CD8-positive, alpha-beta T cell (primary cell): ENCODE measurements at regions of chr2 and their contacts with region 1.

Region 1: DNA sequence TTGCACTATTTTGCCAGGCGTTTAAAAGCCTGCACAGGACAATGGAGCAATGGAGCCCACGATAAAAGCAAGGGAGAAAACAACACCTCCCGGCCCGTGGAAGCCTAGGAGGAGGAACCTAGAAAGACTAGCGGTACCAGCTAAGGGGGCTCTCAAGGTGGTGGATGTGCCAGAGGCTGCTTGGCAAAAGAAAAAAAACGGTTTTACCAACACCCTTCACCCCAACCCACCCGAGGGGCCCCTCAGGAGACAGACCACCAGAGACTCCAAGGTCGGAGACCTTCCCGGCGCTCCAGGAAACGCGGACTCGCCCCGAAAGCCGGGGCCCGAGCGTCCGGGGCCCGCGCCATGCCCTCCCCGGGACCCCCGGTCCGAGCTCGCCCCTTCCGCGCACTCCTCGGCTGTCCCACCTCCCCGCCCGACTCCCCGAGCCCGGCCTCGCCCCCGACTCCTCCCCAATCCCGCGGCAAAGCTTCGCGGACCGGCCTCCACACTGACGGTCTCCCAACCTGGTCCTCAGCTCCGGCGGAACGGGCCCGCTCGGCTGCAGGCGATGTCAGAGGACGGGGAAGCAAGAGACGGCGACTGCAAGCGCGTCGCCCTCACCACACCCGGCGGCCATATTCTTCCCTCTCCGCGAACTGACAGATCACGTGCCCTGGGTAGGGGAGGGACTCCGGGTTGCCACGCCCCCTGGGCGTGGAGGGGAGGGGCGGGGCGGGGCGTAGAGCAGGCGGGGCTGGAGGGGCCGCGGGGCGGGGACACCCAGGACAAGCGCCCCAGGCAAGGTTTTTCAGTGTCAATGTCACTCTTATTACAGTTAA is at the start of gene KIDINS220:
- DNase-seq: peak; percentile 74 to 92 (median 85)
- ATAC-seq: peak; percentile 96
- H3K4me3 ChIP-seq: peak within 1 kb of the TSS; percentile 76 to 96
- H3K4me3 Mint-ChIP-seq: peak within 1 kb of the TSS; percentile 100
- H3K27ac ChIP-seq: peak within 1 kb of the TSS; percentile 62 to 81
- H3K27ac Mint-ChIP-seq: peak within 1 kb of the TSS; percentile 99
- H3K4me1 ChIP-seq: peaks cover 49% of the 10 kb centered on the region
- H3K4me1 Mint-ChIP-seq: peaks cover 55% of the 10 kb centered on the region
- H3K27me3 ChIP-seq: peaks cover 0 to 2% of the 10 kb centered on the region in 2 experiments
- H3K27me3 Mint-ChIP-seq: no peaks in the 10 kb centered on the region
- CTCF ChIP-seq: no peak
- total RNA-seq, gene KIDINS220: 26.2 to 28.8 TPM

Region 2: DNA sequence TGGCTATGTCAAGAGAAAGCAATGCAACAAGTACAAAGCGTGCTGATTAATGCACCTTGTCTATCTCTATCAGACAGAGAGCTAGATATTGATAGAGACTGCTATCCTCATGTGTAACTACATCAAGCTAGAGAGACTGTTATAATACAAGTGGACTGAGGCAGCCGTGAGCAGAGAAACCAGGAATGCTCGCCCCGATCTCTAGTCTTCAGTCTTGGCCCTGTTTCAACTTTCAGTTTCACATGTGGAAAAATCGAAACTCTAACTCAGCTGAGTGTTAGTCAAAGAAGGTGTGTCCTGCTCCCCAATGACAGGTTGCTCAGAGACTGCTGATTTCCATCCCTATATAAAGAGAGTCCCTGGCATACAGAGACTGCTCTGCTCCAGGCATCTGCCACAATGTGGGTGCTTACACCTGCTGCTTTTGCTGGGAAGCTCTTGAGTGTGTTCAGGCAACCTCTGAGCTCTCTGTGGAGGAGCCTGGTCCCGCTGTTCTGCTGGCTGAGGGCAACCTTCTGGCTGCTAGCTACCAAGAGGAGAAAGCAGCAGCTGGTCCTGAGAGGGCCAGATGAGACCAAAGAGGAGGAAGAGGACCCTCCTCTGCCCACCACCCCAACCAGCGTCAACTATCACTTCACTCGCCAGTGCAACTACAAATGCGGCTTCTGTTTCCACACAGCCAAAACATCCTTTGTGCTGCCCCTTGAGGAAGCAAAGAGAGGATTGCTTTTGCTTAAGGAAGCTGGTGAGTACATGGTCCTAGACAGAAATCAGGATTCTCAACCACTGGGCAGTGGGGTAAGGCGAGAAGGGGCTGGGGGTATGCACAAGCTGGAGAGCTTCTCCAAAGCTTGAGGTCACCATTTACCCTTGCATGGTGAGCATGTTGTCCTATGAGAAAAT is 1959.5 kb before region 1 on chr2 and contains the start of gene RSAD2:
- CTCF ChIA-PET with region 1: no interaction called
- POLR2A ChIA-PET with region 1: no interaction called
- intact Hi-C with region 1: loop called in 1 of 2 experiments (anchors 10 kb)
- DNase-seq: peak in 7 of 9 experiments; percentile 16 to 81 (median 47)
- ATAC-seq: peak; percentile 84
- H3K4me3 ChIP-seq: peak within 1 kb of the TSS; percentile 56 to 63
- H3K4me3 Mint-ChIP-seq: peak within 1 kb of the TSS; percentile 88
- H3K27ac ChIP-seq: peak within 1 kb of the TSS; percentile 34 to 47
- H3K27ac Mint-ChIP-seq: peak within 1 kb of the TSS; percentile 87
- H3K4me1 ChIP-seq: peaks cover 59% of the 10 kb centered on the region
- H3K4me1 Mint-ChIP-seq: peaks cover 66% of the 10 kb centered on the region
- H3K27me3 ChIP-seq: no peaks in the 10 kb centered on the region
- H3K27me3 Mint-ChIP-seq: no peaks in the 10 kb centered on the region
- CTCF ChIP-seq: no peak
- total RNA-seq, gene RSAD2: 1.8 to 2.1 TPM

Region 3: DNA sequence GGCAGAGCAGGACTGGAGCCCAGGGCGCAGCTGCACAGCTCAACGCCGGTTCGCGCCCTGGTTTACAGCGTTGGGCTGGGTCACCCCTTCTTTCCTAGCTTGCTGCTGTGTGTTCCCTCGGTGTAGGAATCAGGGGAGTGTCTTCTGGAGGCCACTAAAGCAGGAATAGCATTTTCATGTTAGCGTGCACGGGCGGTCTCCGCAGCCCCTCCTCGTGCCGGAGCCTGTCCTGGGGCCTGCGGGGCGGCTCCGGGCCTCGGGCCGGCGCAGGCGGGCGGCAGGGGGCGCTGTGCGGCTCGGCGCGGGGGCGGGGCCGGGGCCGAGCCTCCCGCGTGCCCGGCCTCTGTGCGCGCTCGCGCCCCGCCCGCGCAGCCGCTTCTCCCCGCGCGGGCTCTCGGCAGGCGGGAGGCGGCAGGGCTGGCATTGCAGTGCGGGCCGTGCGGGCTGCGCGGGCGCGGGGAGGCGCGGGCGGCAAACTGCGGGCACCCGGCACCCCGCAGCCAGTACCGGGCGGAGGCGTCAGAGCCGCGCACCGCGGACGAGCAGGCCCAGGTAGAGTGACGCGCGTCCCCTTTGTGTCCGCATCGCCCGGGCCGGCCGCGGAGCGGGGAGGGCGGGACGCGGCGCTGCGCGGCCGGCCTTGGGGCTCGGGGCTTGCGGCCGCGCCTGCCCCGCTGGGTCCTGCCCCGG is 1920.0 kb before region 1 on chr2 and contains the start of gene RNF144A:
- CTCF ChIA-PET with region 1: no interaction called
- POLR2A ChIA-PET with region 1: no interaction called
- intact Hi-C with region 1: loop called in 1 of 2 experiments (anchors 10 kb)
- DNase-seq: peak; percentile 52 to 89 (median 74)
- ATAC-seq: peak; percentile 77
- H3K4me3 ChIP-seq: peak within 1 kb of the TSS; percentile 57 to 65
- H3K4me3 Mint-ChIP-seq: peak within 1 kb of the TSS; percentile 80
- H3K27ac ChIP-seq: peak within 1 kb of the TSS in 1 of 2 experiments; percentile 28
- H3K27ac Mint-ChIP-seq: no peak within 1 kb of the TSS
- H3K4me1 ChIP-seq: peaks cover 79% of the 10 kb centered on the region
- H3K4me1 Mint-ChIP-seq: peaks cover 75% of the 10 kb centered on the region
- H3K27me3 ChIP-seq: no peaks in the 10 kb centered on the region
- H3K27me3 Mint-ChIP-seq: no peaks in the 10 kb centered on the region
- CTCF ChIP-seq: peak; percentile 63
- total RNA-seq, gene RNF144A: 25.8 to 28.8 TPM

Region 4: DNA sequence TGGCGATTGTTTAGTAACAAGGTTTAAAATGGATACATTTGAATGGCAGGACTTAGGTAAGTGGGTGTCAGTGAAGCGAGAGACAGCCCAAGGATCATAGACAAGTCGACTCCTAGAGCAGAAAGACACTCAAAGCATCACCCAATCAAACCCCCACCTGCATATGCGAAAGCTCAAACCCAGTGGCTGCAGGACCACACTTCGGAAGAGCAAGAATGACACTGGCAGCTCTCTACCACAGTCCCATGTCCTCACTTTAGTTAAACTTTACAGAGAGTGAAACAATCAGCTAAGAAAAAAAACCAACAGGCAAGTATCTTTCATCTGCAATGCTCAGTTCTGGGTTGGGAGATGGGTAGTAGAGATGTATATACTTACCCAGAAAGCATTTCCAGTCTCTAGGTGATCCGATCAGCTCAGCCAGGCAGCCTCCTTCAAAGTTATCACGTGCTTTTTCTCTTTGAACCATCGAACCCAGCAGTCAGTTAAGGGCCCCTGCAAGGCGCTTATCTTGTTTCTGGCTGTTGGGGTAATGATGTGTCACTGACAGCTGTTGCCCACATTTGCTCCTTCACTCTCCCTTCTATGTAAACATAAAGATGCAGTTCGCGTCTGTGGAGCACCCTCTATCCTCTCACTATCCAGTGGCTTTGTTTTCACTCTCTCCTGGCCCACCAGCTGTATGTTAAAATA is 512.9 kb before region 1 on chr2:
- CTCF ChIA-PET with region 1: no interaction called
- POLR2A ChIA-PET with region 1: no interaction called
- intact Hi-C with region 1: no loop called
- DNase-seq: peak in 2 of 9 experiments; percentile 26 to 44
- ATAC-seq: no peak
- H3K4me3 ChIP-seq: no peak overlapping the region
- H3K4me3 Mint-ChIP-seq: no peak overlapping the region
- H3K27ac ChIP-seq: peak overlapping the region in 1 of 2 experiments; percentile 47
- H3K27ac Mint-ChIP-seq: no peak overlapping the region
- H3K4me1 ChIP-seq: no peaks in the 10 kb centered on the region
- H3K4me1 Mint-ChIP-seq: peaks cover 19% of the 10 kb centered on the region
- H3K27me3 ChIP-seq: no peaks in the 10 kb centered on the region
- H3K27me3 Mint-ChIP-seq: no peaks in the 10 kb centered on the region
- CTCF ChIP-seq: no peak

Region 5: DNA sequence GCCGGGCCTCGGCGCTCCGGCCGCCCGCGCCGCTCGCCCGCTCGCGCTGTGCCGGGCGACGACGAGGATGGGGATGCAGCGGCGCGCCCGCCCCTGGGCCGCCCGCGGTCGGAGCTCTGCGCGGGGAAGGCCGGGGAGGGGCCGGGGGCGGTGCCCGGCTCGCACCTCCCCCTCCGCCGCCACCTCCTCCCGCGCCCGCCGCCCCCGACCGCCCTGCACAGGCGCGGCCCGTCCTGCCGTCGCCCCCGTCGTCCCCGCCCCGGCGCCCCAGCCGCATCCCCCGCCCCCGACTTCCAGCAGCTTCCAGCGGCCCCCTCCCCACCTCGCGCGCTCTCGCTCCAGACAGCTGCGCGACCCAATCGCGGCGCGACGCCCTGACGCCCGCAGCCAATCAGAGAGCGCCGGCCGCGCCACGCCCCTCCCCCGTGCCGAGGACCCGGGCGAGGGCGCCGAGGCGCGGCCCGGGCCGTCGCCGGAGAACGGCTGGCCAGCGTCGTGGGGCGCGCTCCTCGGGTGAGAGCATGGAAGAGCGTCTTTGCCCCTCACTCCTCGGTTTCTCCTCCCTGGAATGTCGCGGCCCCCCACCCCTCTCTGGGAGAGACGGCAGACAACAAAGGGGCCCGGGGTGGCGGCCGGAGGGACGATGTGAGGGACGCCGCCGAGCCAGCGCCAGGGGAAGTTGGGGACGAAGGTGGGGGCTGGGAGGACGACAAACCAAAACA is 166.6 kb after region 1 on chr2 and contains the start of gene MBOAT2:
- CTCF ChIA-PET with region 1: no interaction called
- POLR2A ChIA-PET with region 1: no interaction called
- intact Hi-C with region 1: loop called (anchors 2 to 5 kb)
- DNase-seq: peak; percentile 39 to 88 (median 71)
- ATAC-seq: peak; percentile 88
- H3K4me3 ChIP-seq: peak within 1 kb of the TSS; percentile 53 to 69
- H3K4me3 Mint-ChIP-seq: peak within 1 kb of the TSS; percentile 83
- H3K27ac ChIP-seq: peak within 1 kb of the TSS in 1 of 2 experiments; percentile 18
- H3K27ac Mint-ChIP-seq: peak within 1 kb of the TSS; percentile 60
- H3K4me1 ChIP-seq: peaks cover 9% of the 10 kb centered on the region
- H3K4me1 Mint-ChIP-seq: peaks cover 16% of the 10 kb centered on the region
- H3K27me3 ChIP-seq: no peaks in the 10 kb centered on the region
- H3K27me3 Mint-ChIP-seq: peaks cover 5% of the 10 kb centered on the region
- CTCF ChIP-seq: no peak
- total RNA-seq, gene MBOAT2: 0.54 to 1.1 TPM

Region 6: GRCh38 chr2:9474361-9474967 is 637.3 kb after region 1 on chr2 and contains the start of gene IAH1:
- CTCF ChIA-PET with region 1: no interaction called
- POLR2A ChIA-PET with region 1: no interaction called
- intact Hi-C with region 1: loop called in 1 of 2 experiments (anchors 10 kb)
- DNase-seq: peak; percentile 58 to 86 (median 74)
- ATAC-seq: peak; percentile 80
- H3K4me3 ChIP-seq: peak within 1 kb of the TSS; percentile 83 to 91
- H3K4me3 Mint-ChIP-seq: peak within 1 kb of the TSS; percentile 84
- H3K27ac ChIP-seq: peak within 1 kb of the TSS; percentile 95 to 97
- H3K27ac Mint-ChIP-seq: peak within 1 kb of the TSS; percentile 90
- H3K4me1 ChIP-seq: peaks cover 18% of the 10 kb centered on the region
- H3K4me1 Mint-ChIP-seq: peaks cover 50% of the 10 kb centered on the region
- H3K27me3 ChIP-seq: no peaks in the 10 kb centered on the region
- H3K27me3 Mint-ChIP-seq: no peaks in the 10 kb centered on the region
- CTCF ChIP-seq: no peak
- total RNA-seq, gene IAH1: 48.2 to 52.5 TPM

Region 7: GRCh38 chr2:10036095-10036884 is 1199.1 kb after region 1 on chr2:
- CTCF ChIA-PET with region 1: no interaction called
- POLR2A ChIA-PET with region 1: no interaction called
- intact Hi-C with region 1: no loop called
- DNase-seq: peak in 5 of 9 experiments; percentile 43 to 80 (median 56)
- ATAC-seq: peak; percentile 88
- H3K4me3 ChIP-seq: no peak overlapping the region
- H3K4me3 Mint-ChIP-seq: no peak overlapping the region
- H3K27ac ChIP-seq: no peak overlapping the region
- H3K27ac Mint-ChIP-seq: no peak overlapping the region
- H3K4me1 ChIP-seq: no peaks in the 10 kb centered on the region
- H3K4me1 Mint-ChIP-seq: peaks cover 8% of the 10 kb centered on the region
- H3K27me3 ChIP-seq: no peaks in the 10 kb centered on the region
- H3K27me3 Mint-ChIP-seq: no peaks in the 10 kb centered on the region
- CTCF ChIP-seq: no peak